Natural killer cell (primary cell): ENCODE measurements at regions of chr2 and their contacts with region 1.

Region 1: DNA sequence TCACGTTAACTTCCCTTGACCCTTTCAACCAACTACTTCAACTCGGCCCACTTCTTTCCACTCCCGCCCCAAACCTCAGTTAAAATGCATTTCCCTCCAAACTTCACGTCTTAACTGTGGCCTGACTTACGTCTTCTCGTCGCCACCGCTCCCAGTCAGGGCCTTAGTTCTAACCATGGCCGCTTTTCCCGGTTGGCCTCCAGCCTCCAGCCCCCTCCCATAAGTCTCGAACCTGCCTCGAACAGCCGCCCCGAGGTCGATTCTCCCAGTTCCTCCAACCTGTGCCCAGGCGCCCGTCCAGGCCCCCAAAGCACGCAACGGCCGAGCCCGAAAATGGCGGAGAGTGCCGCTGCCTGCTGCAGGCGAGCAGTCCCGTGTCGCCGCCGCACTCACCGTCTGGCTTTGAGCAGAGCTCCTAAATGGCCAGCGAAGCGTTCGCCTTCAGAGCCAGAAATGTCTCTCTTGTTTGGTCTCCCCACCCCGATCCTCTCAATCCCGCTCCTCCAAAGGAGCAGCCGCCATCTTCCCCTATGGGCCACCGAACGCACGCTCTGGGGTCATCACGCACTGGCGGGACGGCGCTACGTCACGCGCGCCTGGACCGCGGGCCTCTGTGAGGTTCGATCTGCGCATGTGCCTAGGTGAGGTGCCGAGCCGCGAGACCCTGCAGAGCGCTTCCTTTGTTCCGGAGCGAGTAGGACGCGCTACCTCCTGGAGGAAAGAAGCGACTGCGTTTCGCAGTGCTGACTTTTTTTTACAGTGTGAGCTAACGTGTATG is at the start of gene WDR33:
- DNase-seq: peak; percentile 86 to 98
- ATAC-seq: peak; percentile 92 to 97 (median 93)
- H3K4me3 ChIP-seq: peak within 1 kb of the TSS; percentile 82
- H3K4me3 Mint-ChIP-seq: peak within 1 kb of the TSS; percentile 100
- H3K27ac ChIP-seq: peak within 1 kb of the TSS; percentile 92
- H3K27ac Mint-ChIP-seq: peak within 1 kb of the TSS; percentile 100
- H3K4me1 ChIP-seq: peaks cover 22% of the 10 kb centered on the region
- H3K4me1 Mint-ChIP-seq: peaks cover 48 to 50% of the 10 kb centered on the region in 2 donors
- H3K27me3 ChIP-seq: no peaks in the 10 kb centered on the region
- H3K27me3 Mint-ChIP-seq: no peaks in the 10 kb centered on the region
- CTCF ChIP-seq: no peak
- total RNA-seq, gene WDR33: 55.2 to 78.4 (median 55.3) TPM

Region 2: DNA sequence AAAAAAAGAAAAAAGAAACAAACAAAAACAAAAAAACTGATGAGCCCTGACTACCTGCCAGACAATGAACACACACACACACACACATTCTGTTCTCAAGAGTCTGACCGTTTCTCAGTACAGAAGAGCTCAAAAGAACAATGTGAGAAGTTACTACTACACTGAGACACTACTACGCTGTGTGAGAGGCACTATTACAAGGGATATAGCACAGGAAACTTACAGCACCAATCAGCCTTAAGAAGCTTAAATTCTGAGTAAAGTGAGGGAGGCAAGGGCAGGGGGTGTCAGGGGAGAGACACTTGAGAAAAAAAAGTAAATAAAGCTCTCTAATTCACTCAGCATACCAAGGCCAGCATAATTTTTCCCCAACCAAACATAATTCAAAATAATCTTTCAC is 32.4 kb before region 1 on chr2:
- intact Hi-C with region 1: no loop called
- DNase-seq: no peak
- ATAC-seq: peak; percentile 93 to 94 (median 94)
- H3K4me3 ChIP-seq: no peak overlapping the region
- H3K4me3 Mint-ChIP-seq: peak overlapping the region; percentile 58
- H3K27ac ChIP-seq: no peak overlapping the region
- H3K27ac Mint-ChIP-seq: peak overlapping the region; percentile 76 to 78
- H3K4me1 ChIP-seq: peaks cover 18% of the 10 kb centered on the region
- H3K4me1 Mint-ChIP-seq: peaks cover 45 to 46% of the 10 kb centered on the region in 2 donors
- H3K27me3 ChIP-seq: no peaks in the 10 kb centered on the region
- H3K27me3 Mint-ChIP-seq: no peaks in the 10 kb centered on the region
- CTCF ChIP-seq: no peak

Region 3: GRCh38 chr2:127790694-127791529 is 19.9 kb before region 1 on chr2:
- intact Hi-C with region 1: no loop called
- DNase-seq: no peak
- ATAC-seq: no peak
- H3K4me3 ChIP-seq: no peak overlapping the region
- H3K4me3 Mint-ChIP-seq: no peak overlapping the region
- H3K27ac ChIP-seq: no peak overlapping the region
- H3K27ac Mint-ChIP-seq: peak overlapping the region; percentile 59 to 63
- H3K4me1 ChIP-seq: peaks cover 15% of the 10 kb centered on the region
- H3K4me1 Mint-ChIP-seq: peaks cover 33 to 39% of the 10 kb centered on the region in 2 donors
- H3K27me3 ChIP-seq: no peaks in the 10 kb centered on the region
- H3K27me3 Mint-ChIP-seq: no peaks in the 10 kb centered on the region
- CTCF ChIP-seq: no peak

Region 4: DNA sequence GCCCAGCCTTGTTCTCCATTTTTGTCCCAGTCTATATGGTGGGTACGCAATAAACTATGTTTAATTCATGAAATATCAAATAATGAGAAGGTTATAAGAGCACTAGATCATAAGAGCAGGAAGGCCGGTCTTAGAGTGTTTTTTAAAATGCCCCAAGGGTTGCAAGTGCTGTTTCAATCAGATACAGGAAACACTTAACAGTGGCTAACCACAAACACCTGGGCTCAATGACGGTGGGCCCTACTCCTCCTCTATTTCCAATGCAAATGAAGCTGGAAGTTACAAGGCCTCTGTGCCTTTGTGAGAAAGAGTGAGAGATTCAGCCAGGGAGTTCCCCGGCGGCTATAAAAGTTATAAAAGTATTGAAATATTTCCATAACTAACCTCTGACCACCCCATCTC is 19.0 kb after region 1 on chr2:
- intact Hi-C with region 1: loop called (anchors 1 kb)
- DNase-seq: peak; percentile 51 to 87
- ATAC-seq: peak; percentile 91 to 99 (median 94)
- H3K4me3 ChIP-seq: no peak overlapping the region
- H3K4me3 Mint-ChIP-seq: peak overlapping the region; percentile 73
- H3K27ac ChIP-seq: peak overlapping the region; percentile 85
- H3K27ac Mint-ChIP-seq: peak overlapping the region; percentile 61 to 91
- H3K4me1 ChIP-seq: peaks cover 30% of the 10 kb centered on the region
- H3K4me1 Mint-ChIP-seq: peaks cover 13 to 15% of the 10 kb centered on the region in 2 donors
- H3K27me3 ChIP-seq: no peaks in the 10 kb centered on the region
- H3K27me3 Mint-ChIP-seq: no peaks in the 10 kb centered on the region
- CTCF ChIP-seq: no peak

Region 5: DNA sequence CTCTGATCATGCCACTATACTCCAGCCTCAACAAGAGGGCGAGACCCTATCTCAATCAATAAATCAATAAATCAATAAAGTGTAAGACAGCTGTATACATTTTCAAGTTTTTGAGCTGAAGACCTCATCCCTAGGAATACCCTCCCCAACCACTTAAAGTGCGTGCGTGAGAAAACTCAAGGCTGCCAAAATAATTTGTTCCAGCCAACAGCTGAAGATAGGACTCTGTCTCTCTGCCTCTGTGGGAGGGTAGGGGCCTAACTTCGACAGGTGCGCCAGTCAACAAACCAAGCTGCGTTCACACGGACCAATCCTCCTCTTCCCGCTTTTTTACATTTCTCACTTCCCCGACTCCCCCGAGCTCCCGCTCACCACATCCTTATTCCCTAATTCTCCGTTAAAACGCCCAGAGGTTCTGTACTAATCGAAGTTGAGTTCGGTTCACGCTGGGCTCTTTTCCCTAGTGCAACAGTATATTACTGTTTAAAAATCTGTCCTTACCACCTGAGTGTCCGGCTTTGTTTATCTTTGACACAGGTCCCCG is 46.5 kb after region 1 on chr2:
- intact Hi-C with region 1: loop called (anchors 2 kb)
- DNase-seq: peak in 1 of 2 donors; percentile 48
- ATAC-seq: no peak
- H3K4me3 ChIP-seq: peak overlapping the region; percentile 70
- H3K4me3 Mint-ChIP-seq: peak overlapping the region; percentile 92
- H3K27ac ChIP-seq: peak overlapping the region; percentile 64
- H3K27ac Mint-ChIP-seq: peak overlapping the region; percentile 82 to 89
- H3K4me1 ChIP-seq: peaks cover 33% of the 10 kb centered on the region
- H3K4me1 Mint-ChIP-seq: peaks cover 24 to 46% of the 10 kb centered on the region in 2 donors
- H3K27me3 ChIP-seq: no peaks in the 10 kb centered on the region
- H3K27me3 Mint-ChIP-seq: no peaks in the 10 kb centered on the region
- CTCF ChIP-seq: no peak